Esophagus muscularis mucosa (tissue), 4 donors: ENCODE measurements at regions of chr17 and their contacts with region 1.

Region 1: GRCh38 chr17:35063514-35064223 is at the start of gene RFFL:
- DNase-seq: peak; percentile 96
- H3K4me3 ChIP-seq: peak within 1 kb of the TSS; percentile 23 to 47 (median 31)
- H3K27ac ChIP-seq: peak within 1 kb of the TSS; percentile 72 to 79 (median 78)
- H3K4me1 ChIP-seq: peaks cover 14 to 21% (median 17%) of the 10 kb centered on the region in 4 donors
- H3K27me3 ChIP-seq: no peaks in the 10 kb centered on the region
- CTCF ChIP-seq: peak; percentile 19 to 48 (median 21)
- EP300 ChIP-seq: no peak
- POLR2A ChIP-seq: no peak
- total RNA-seq, gene RFFL: 19.5 to 40.9 (median 33.3) TPM

Region 2: GRCh38 chr17:34980681-34981537 is 82.8 kb before region 1 on chr17:
- intact Hi-C with region 1: no loop called
- DNase-seq: peak; percentile 95
- H3K4me3 ChIP-seq: peak overlapping the region; percentile 83 to 95 (median 92)
- H3K27ac ChIP-seq: peak overlapping the region; percentile 95 to 100 (median 100)
- H3K4me1 ChIP-seq: peaks cover 23 to 55% (median 44%) of the 10 kb centered on the region in 4 donors
- H3K27me3 ChIP-seq: no peaks in the 10 kb centered on the region
- CTCF ChIP-seq: peak in 2 of 3 experiments; percentile 33 to 41
- EP300 ChIP-seq: no peak
- POLR2A ChIP-seq: peak; percentile 63

Region 3: DNA sequence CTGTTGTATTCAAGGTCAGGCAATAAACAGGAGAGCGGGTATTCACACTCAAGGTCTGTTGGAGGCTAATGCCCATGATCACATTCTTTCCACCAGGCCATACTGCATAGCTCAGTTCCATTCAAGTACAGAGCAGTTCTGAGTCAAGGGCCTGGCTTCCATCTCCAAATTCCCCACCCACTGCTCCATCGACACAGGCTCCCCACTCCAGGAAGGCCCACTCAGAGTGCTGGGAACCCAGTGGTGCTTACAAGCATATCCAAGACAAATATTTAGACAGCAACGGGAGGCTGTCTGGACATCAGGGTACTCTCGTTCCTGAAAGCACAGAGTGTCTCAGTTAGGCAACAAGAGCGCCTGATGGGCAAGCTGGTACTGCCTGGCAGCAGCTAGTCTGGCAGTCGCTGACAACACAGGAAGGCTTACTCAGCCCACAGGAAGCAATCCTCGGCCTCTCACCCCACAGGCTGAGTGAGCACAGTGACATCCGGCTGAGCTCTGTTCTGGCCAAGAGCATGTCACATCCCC is 41.1 kb before region 1 on chr17:
- intact Hi-C with region 1: loop called (anchors 5 kb)
- DNase-seq: peak; percentile 93
- H3K4me3 ChIP-seq: no peak overlapping the region
- H3K27ac ChIP-seq: peak overlapping the region; percentile 69 to 77 (median 75)
- H3K4me1 ChIP-seq: peaks cover 23 to 29% (median 25%) of the 10 kb centered on the region in 4 donors
- H3K27me3 ChIP-seq: no peaks in the 10 kb centered on the region
- CTCF ChIP-seq: peak in 1 of 3 experiments; percentile 32
- EP300 ChIP-seq: peak; percentile 81
- POLR2A ChIP-seq: no peak

Region 4: GRCh38 chr17:35094902-35095301 is 31.2 kb after region 1 on chr17:
- intact Hi-C with region 1: no loop called
- DNase-seq: no peak
- H3K4me3 ChIP-seq: no peak overlapping the region
- H3K27ac ChIP-seq: no peak overlapping the region
- H3K4me1 ChIP-seq: peaks cover 0 to 2% (median under 1%) of the 10 kb centered on the region in 4 donors
- H3K27me3 ChIP-seq: no peaks in the 10 kb centered on the region
- CTCF ChIP-seq: no peak
- EP300 ChIP-seq: no peak
- POLR2A ChIP-seq: no peak

Region 5: DNA sequence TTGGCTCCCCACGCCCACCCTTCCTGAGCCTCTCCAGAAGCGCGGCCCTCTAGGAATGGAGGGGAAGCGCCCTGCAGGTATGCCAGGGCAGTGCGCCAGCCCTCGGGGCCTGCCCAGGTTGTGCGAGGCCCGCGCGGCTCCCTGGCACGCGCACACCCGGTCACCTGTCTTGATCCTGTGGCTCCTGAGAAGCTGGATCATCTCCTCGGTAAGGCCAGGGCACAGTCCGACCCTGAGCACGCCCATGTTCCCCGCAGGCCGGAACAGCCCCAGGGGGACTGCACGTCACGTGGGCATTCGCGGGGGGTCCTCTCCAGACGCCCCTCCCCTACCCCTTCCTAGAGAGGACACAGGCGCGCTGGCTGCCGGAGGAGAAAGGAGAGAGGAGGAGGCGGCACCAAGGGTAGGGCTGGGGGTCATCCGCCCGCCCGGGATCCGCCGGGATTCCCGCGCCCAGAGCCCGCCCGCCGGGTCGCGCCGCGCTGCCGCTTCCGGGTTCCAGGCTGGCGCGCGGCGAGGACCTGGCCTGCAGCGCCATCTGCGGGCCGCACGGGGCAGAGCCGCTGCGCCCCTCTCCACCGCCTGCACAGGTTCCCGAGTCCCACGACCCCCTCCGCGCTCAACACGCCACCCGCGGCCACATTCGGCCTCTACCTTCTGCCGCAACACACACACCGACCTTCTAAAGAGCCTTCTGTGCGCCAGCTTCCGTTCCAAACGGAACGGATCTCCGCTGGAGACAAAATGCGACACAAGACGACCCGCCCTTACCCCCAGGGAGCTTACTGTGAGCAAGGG is 55.9 kb after region 1 on chr17 and contains the start of gene RAD51D:
- intact Hi-C with region 1: no loop called
- DNase-seq: no peak
- H3K4me3 ChIP-seq: peak within 1 kb of the TSS; percentile 74 to 89 (median 88)
- H3K27ac ChIP-seq: peak within 1 kb of the TSS; percentile 74 to 83 (median 80)
- H3K4me1 ChIP-seq: peaks cover 16 to 39% (median 21%) of the 10 kb centered on the region in 4 donors
- H3K27me3 ChIP-seq: no peaks in the 10 kb centered on the region
- CTCF ChIP-seq: peak in 2 of 3 experiments; percentile 92 to 99
- EP300 ChIP-seq: no peak
- POLR2A ChIP-seq: no peak
- total RNA-seq, gene RAD51D: 8.9 to 12.8 (median 10.7) TPM